T-cell (primary cell): ENCODE measurements at regions of chr1 and their contacts with region 1.

Region 1: GRCh38 chr1:220255204-220255603 is 17.0 kb downstream of the RAB3GAP2 start:
- DNase-seq: no peak
- ATAC-seq: no peak
- H3K4me3 ChIP-seq: no peak overlapping the region
- H3K4me3 Mint-ChIP-seq: no peak overlapping the region
- H3K27ac ChIP-seq: no peak overlapping the region
- H3K27ac Mint-ChIP-seq: peak overlapping the region in 1 of 2 donors; percentile 4
- H3K4me1 ChIP-seq: no peaks in the 10 kb centered on the region
- H3K4me1 Mint-ChIP-seq: peaks cover 45 to 54% (median 45%) of the 10 kb centered on the region in 3 donors
- H3K27me3 ChIP-seq: no peaks in the 10 kb centered on the region
- H3K27me3 Mint-ChIP-seq: no peaks in the 10 kb centered on the region

Region 2: GRCh38 chr1:220219136-220219442 is 36.1 kb before region 1 on chr1:
- CTCF ChIA-PET with region 1: interaction called in 1 of 2 experiments, 3 read pairs
- POLR2A ChIA-PET with region 1: interaction called in 1 of 2 experiments, 12 read pairs
- DNase-seq: no peak
- ATAC-seq: no peak
- H3K4me3 ChIP-seq: no peak overlapping the region
- H3K4me3 Mint-ChIP-seq: no peak overlapping the region
- H3K27ac ChIP-seq: no peak overlapping the region
- H3K27ac Mint-ChIP-seq: no peak overlapping the region
- H3K4me1 ChIP-seq: no peaks in the 10 kb centered on the region
- H3K4me1 Mint-ChIP-seq: peaks cover 38 to 57% (median 44%) of the 10 kb centered on the region in 3 donors
- H3K27me3 ChIP-seq: no peaks in the 10 kb centered on the region
- H3K27me3 Mint-ChIP-seq: no peaks in the 10 kb centered on the region

Region 3: GRCh38 chr1:220235462-220235861 is 19.7 kb before region 1 on chr1:
- CTCF ChIA-PET with region 1: no interaction called
- POLR2A ChIA-PET with region 1: interaction called in 1 of 2 experiments, 10 read pairs
- DNase-seq: no peak
- ATAC-seq: no peak
- H3K4me3 ChIP-seq: no peak overlapping the region
- H3K4me3 Mint-ChIP-seq: no peak overlapping the region
- H3K27ac ChIP-seq: no peak overlapping the region
- H3K27ac Mint-ChIP-seq: no peak overlapping the region
- H3K4me1 ChIP-seq: no peaks in the 10 kb centered on the region
- H3K4me1 Mint-ChIP-seq: peaks cover 20 to 28% (median 24%) of the 10 kb centered on the region in 3 donors
- H3K27me3 ChIP-seq: no peaks in the 10 kb centered on the region
- H3K27me3 Mint-ChIP-seq: no peaks in the 10 kb centered on the region